PC-9 (cell line): ENCODE measurements at regions of chr7 and their contacts with region 1.

Region 1: GRCh38 chr7:116782177-116782711 is 80.1 kb upstream of the CAPZA2 start:
- DNase-seq: peak in 1 of 2 experiments; percentile 90
- H3K4me3 ChIP-seq: no peak overlapping the region
- H3K27ac ChIP-seq: peak overlapping the region; percentile 85
- H3K4me1 ChIP-seq: peaks cover 88% of the 10 kb centered on the region
- H3K27me3 ChIP-seq: no peaks in the 10 kb centered on the region
- CTCF ChIP-seq: no peak

Region 2: GRCh38 chr7:116706668-116707126 is 75.5 kb before region 1 on chr7:
- CTCF ChIA-PET with region 1: no interaction called
- POLR2A ChIA-PET with region 1: interaction called, 4 read pairs
- intact Hi-C with region 1: loop called (anchors 5 kb)
- DNase-seq: peak; percentile 71 to 80
- H3K4me3 ChIP-seq: peak overlapping the region; percentile 43; the same call in 1 of the 2 replicates
- H3K27ac ChIP-seq: peak overlapping the region; percentile 82
- H3K4me1 ChIP-seq: peaks cover 67% of the 10 kb centered on the region
- H3K27me3 ChIP-seq: no peaks in the 10 kb centered on the region
- CTCF ChIP-seq: no peak

Region 3: GRCh38 chr7:116834815-116835533 is 52.7 kb after region 1 on chr7:
- CTCF ChIA-PET with region 1: no interaction called
- POLR2A ChIA-PET with region 1: no interaction called
- intact Hi-C with region 1: no loop called
- DNase-seq: peak in 1 of 2 experiments; percentile 49
- H3K4me3 ChIP-seq: no peak overlapping the region
- H3K27ac ChIP-seq: no peak overlapping the region
- H3K4me1 ChIP-seq: peaks cover 13% of the 10 kb centered on the region; the same call in 1 of the 2 replicates
- H3K27me3 ChIP-seq: no peaks in the 10 kb centered on the region
- CTCF ChIP-seq: no peak